ENCODE measurements at regions of chr12 and their contacts with region 1.

Region 1: DNA sequence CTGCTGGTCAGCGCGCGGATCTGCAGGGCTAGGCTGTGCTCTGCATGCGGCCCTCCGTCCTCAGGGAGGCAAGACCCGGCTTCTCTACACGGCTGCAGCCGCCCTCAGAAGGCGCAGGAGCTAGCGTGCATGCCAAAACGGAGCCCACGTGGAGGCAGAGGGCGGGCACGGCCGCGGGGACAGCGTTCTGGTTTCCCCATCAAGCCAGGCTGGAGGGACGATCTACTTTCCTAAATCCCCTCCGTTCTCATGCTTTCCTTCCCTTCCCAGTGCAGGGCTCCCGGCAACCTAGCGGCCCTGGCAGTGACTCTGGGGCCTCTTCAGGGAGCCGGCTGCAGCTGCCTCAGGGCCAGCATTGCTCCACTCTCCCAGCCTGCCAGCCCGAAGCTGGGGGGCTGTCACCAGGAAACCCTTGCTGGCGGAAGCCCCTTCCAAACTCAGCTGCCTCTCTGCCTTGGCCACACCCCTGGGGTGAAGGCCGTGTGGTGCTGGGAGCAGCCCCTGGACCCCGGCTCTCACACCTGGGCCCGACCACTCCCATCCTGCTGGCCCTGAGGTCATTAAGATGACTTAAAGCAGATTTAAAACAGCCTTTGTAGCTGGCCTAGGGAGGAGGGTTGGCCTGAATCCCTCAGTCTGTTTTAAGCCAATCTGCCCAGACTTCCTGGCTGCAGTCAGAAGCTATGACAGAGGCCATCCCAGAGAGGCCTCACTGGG is 9.2 kb upstream of the GOLGA3 start:
- DNase-seq: no peak
- ATAC-seq: no peak
- H3K4me3 Mint-ChIP-seq: peak overlapping the region; percentile 32
- H3K27ac Mint-ChIP-seq: peak overlapping the region; percentile 89
- H3K4me1 Mint-ChIP-seq: peaks cover 38% of the 10 kb centered on the region
- H3K27me3 Mint-ChIP-seq: no peaks in the 10 kb centered on the region

Region 2: DNA sequence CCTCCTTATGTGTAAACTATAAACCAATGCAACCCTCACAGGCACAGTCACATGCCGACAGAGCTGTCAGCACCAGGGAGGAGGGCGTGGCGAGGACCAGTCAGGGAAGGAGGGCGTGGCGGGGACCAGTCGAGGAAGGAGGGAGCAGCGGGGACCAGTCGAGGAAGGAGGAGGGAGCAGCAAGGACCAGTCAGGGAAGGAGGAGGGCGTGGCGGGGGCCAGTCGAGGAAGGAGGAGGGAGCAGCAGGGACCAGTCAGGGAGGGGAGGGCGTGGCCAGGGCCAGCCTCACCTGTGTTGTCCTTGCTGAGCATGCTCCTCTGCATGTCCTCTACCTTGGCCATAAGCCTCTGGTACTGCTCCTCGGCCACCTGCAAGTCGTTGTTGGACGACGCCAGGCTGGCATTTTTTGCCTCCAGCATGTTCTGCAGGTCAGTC is 33.4 kb before region 1 on chr12:
- POLR2A ChIA-PET with region 1: no interaction called
- DNase-seq: no peak
- ATAC-seq: no peak
- H3K4me3 Mint-ChIP-seq: no peak overlapping the region
- H3K27ac Mint-ChIP-seq: no peak overlapping the region
- H3K4me1 Mint-ChIP-seq: peaks cover 14% of the 10 kb centered on the region
- H3K27me3 Mint-ChIP-seq: no peaks in the 10 kb centered on the region

Region 3: GRCh38 chr12:132887513-132888351 is 49.9 kb after region 1 on chr12 and contains the start of gene CHFR:
- POLR2A ChIA-PET with region 1: interaction called, 20 read pairs
- DNase-seq: peak; percentile 95
- ATAC-seq: peak; percentile 99
- H3K4me3 Mint-ChIP-seq: peak within 1 kb of the TSS; percentile 93
- H3K27ac Mint-ChIP-seq: peak within 1 kb of the TSS; percentile 99
- H3K4me1 Mint-ChIP-seq: peaks cover 15% of the 10 kb centered on the region
- H3K27me3 Mint-ChIP-seq: no peaks in the 10 kb centered on the region
- total RNA-seq, gene CHFR: 93.6 to 96.1 TPM

Region 4: GRCh38 chr12:132908145-132909044 is 70.5 kb after region 1 on chr12:
- POLR2A ChIA-PET with region 1: interaction called, 10 read pairs
- DNase-seq: peak; percentile 94
- ATAC-seq: peak; percentile 95
- H3K4me3 Mint-ChIP-seq: peak overlapping the region; percentile 91
- H3K27ac Mint-ChIP-seq: peak overlapping the region; percentile 96
- H3K4me1 Mint-ChIP-seq: peaks cover 9% of the 10 kb centered on the region
- H3K27me3 Mint-ChIP-seq: peaks cover 13% of the 10 kb centered on the region